ENCODE measurements at regions of chr12 and their contacts with region 1.

Region 1: DNA sequence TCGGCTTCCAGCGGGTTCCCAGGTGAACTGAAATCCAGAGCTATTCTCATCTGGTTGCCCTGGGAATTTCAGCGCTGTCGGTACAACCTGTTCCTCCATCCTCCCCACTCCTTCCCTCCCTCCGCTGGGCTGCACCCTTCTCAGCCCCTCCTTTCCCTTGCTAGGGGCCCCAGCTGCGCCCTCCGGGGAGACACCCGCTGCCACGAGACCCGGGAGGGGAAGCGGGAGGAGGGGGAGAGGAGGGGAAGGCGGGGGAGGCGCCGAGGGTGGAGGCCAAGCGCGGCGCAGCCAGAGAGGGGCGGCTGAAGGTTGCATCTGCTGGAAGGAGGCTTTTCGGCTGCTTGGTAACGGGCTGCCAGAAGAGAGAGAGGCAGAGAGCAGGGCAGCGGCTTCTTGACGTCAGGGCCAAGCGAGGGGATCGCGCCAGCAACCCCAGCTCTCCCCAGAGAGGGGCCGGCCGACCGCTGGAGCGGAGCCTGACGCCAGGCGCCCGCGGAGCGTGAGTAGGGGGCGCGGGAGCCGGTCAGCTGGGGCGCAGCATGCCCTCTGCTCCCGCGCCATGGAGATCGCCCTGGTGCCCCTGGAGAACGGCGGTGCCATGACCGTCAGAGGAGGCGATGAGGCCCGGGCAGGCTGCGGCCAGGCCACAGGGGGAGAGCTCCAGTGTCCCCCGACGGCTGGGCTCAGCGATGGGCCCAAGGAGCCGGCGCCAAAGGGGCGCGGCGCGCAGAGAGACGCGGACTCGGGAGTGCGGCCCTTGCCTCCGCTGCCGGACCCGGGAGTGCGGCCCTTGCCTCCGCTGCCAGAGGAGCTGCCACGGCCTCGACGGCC is at the start of gene KCNA5:
- DNase-seq: peak; percentile 43 to 79
- H3K4me3 ChIP-seq: peak within 1 kb of the TSS; percentile 44 to 71
- H3K27ac ChIP-seq: peak within 1 kb of the TSS; percentile 84 to 94
- H3K4me1 ChIP-seq: peaks cover 8 to 13% of the 10 kb centered on the region in 2 donors
- H3K27me3 ChIP-seq: no peaks in the 10 kb centered on the region
- CTCF ChIP-seq: no peak
- total RNA-seq, gene KCNA5: 39.1 TPM

Region 2: GRCh38 chr12:4975574-4975973 is 68.2 kb before region 1 on chr12:
- intact Hi-C with region 1: no loop called
- DNase-seq: no peak
- H3K4me3 ChIP-seq: no peak overlapping the region
- H3K27ac ChIP-seq: peak overlapping the region in 1 of 2 donors; percentile 16
- H3K4me1 ChIP-seq: no peaks in the 10 kb centered on the region
- H3K27me3 ChIP-seq: no peaks in the 10 kb centered on the region
- CTCF ChIP-seq: peak in 1 of 3 experiments; percentile 32

Region 3: DNA sequence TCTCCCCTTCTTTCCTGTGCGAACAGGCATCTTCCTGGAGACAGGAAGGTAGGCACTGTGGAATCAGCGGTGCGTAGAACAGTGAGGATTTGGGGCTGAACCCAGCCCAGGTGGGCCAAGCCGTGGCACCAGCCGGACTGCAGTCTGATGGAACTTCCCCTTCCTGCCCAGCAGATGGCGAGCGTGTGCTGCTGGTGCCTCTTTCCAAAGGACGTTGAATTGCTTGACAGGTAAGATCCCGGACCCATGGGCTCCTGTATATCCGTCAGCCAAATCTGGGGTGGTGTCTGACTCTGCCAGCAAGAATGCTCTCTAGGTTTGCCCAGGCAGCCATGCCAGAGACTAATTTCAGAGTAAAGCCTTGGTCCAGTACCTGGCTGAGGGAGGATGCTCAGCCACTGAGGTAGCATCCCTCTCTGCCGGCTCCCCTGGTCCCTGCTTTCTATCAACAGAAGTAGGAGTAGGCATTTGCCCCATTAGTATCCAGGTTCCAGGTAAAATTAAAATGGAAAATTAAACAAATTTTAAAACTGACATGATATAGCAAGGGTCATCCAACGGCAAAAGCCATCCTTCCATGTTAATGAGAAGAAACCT is 21.2 kb before region 1 on chr12:
- intact Hi-C with region 1: loop called (anchors 2 kb)
- DNase-seq: no peak
- H3K4me3 ChIP-seq: no peak overlapping the region
- H3K27ac ChIP-seq: no peak overlapping the region
- H3K4me1 ChIP-seq: peaks cover 0 to 10% of the 10 kb centered on the region in 2 donors
- H3K27me3 ChIP-seq: no peaks in the 10 kb centered on the region
- CTCF ChIP-seq: peak; percentile 89 to 95 (median 92)

Region 4: DNA sequence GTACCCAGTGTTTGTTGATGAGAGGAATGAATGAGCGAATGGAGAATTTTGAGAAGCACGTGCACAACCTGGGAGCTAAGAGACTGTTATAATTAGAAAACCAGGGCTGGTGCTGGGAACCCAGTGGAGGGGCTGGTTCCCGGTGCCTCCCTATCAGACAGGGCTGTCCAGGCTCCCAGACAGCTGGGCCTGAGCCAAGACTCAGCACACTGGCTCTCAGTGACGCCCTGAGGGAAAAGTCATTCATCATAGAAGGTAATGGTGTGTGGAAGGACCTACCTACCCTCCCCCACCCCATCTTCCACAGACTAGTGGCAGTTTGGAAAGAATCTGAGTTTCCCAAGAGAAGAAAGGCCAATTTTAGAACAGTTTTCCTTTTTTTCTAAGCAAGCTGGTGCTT is 34.6 kb after region 1 on chr12:
- intact Hi-C with region 1: loop called (anchors 1 kb)
- DNase-seq: peak; percentile 80 to 95
- H3K4me3 ChIP-seq: no peak overlapping the region
- H3K27ac ChIP-seq: peak overlapping the region; percentile 85
- H3K4me1 ChIP-seq: peaks cover 19 to 48% of the 10 kb centered on the region in 2 donors
- H3K27me3 ChIP-seq: no peaks in the 10 kb centered on the region
- CTCF ChIP-seq: no peak

Region 5: GRCh38 chr12:5138845-5139244 is 95.0 kb after region 1 on chr12:
- intact Hi-C with region 1: loop called (anchors 10 kb)
- DNase-seq: no peak
- H3K4me3 ChIP-seq: no peak overlapping the region
- H3K27ac ChIP-seq: peak overlapping the region; percentile 84 to 88
- H3K4me1 ChIP-seq: peaks cover 0 to 19% of the 10 kb centered on the region in 2 donors
- H3K27me3 ChIP-seq: no peaks in the 10 kb centered on the region
- CTCF ChIP-seq: no peak